G401 (cell line): ENCODE measurements at regions of chr22 and their contacts with region 1.

Region 1: GRCh38 chr22:25110846-25111578 is 88.6 kb upstream of the CRYBB3 start:
- DNase-seq: peak; percentile 64

Region 2: GRCh38 chr22:25076336-25076735 is 34.7 kb before region 1 on chr22:
- in situ Hi-C with region 1: loop called (anchors 5 kb)
- DNase-seq: no peak

Region 3: DNA sequence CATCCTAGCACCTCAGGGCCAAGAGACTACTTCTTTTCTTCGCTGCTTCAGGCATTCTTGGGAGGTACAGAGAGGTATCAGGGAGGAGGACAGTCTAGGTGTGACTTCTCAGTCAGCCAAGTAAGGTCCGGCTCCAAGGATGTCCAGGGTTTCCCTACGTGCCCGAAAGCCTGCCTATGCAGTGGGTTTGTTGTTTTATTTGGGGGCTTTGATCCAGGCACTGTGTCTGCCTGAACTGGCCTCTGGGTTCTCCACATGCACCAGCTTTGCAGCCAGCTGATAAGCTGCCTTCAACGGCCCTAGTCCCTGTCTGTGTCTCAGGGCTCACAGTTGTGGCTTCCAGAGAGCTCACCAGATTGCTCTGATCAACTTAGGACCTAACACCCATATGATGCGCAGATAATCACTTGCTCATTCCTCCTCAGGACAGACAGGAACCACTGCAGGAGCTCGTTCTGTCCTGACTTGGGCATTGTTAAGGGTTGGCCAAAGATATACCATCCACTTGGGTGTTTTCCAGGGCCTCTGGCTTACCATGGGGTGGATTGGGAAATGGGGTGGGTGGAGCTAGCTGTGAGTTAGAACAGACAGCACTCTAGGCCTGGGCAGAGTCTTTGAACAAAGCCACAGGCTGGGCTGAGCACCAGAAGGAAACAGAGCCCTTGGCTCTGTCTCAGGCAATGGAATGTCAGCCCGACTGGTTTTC is 43.1 kb after region 1 on chr22:
- in situ Hi-C with region 1: no loop called
- DNase-seq: no peak